CD8-positive, alpha-beta T cell (primary cell): ENCODE measurements at regions of chr11 and their contacts with region 1.

Region 1: GRCh38 chr11:3217676-3218482 is 734 bp downstream of the MRGPRG start:
- DNase-seq: peak in 1 of 9 experiments; percentile 4
- ATAC-seq: no peak
- H3K4me3 ChIP-seq: no peak overlapping the region
- H3K4me3 Mint-ChIP-seq: no peak overlapping the region
- H3K27ac ChIP-seq: no peak overlapping the region
- H3K27ac Mint-ChIP-seq: no peak overlapping the region
- H3K4me1 ChIP-seq: peaks cover 10% of the 10 kb centered on the region
- H3K4me1 Mint-ChIP-seq: no peaks in the 10 kb centered on the region
- H3K27me3 ChIP-seq: peaks cover 0 to 4% of the 10 kb centered on the region in 2 experiments
- H3K27me3 Mint-ChIP-seq: peaks cover 25% of the 10 kb centered on the region
- CTCF ChIP-seq: no peak

Region 2: GRCh38 chr11:2778630-2779498 is 439.0 kb before region 1 on chr11:
- CTCF ChIA-PET with region 1: no interaction called
- POLR2A ChIA-PET with region 1: no interaction called
- intact Hi-C with region 1: no loop called
- DNase-seq: peak in 3 of 9 experiments; percentile 4 to 45 (median 9)
- ATAC-seq: no peak
- H3K4me3 ChIP-seq: no peak overlapping the region
- H3K4me3 Mint-ChIP-seq: no peak overlapping the region
- H3K27ac ChIP-seq: no peak overlapping the region
- H3K27ac Mint-ChIP-seq: no peak overlapping the region
- H3K4me1 ChIP-seq: peaks cover 12% of the 10 kb centered on the region
- H3K4me1 Mint-ChIP-seq: peaks cover 13% of the 10 kb centered on the region
- H3K27me3 ChIP-seq: no peaks in the 10 kb centered on the region
- H3K27me3 Mint-ChIP-seq: no peaks in the 10 kb centered on the region
- CTCF ChIP-seq: no peak

Region 3: GRCh38 chr11:2975594-2975993 is 242.3 kb before region 1 on chr11:
- CTCF ChIA-PET with region 1: no interaction called
- POLR2A ChIA-PET with region 1: no interaction called
- intact Hi-C with region 1: loop called in 1 of 2 experiments (anchors 5 kb)
- DNase-seq: peak in 8 of 9 experiments; percentile 21 to 79 (median 62)
- ATAC-seq: peak; percentile 96
- H3K4me3 ChIP-seq: no peak overlapping the region
- H3K4me3 Mint-ChIP-seq: no peak overlapping the region
- H3K27ac ChIP-seq: no peak overlapping the region
- H3K27ac Mint-ChIP-seq: peak overlapping the region; percentile 73
- H3K4me1 ChIP-seq: peaks cover 25% of the 10 kb centered on the region
- H3K4me1 Mint-ChIP-seq: peaks cover 65% of the 10 kb centered on the region
- H3K27me3 ChIP-seq: no peaks in the 10 kb centered on the region
- H3K27me3 Mint-ChIP-seq: no peaks in the 10 kb centered on the region
- CTCF ChIP-seq: peak; percentile 60

Region 4: DNA sequence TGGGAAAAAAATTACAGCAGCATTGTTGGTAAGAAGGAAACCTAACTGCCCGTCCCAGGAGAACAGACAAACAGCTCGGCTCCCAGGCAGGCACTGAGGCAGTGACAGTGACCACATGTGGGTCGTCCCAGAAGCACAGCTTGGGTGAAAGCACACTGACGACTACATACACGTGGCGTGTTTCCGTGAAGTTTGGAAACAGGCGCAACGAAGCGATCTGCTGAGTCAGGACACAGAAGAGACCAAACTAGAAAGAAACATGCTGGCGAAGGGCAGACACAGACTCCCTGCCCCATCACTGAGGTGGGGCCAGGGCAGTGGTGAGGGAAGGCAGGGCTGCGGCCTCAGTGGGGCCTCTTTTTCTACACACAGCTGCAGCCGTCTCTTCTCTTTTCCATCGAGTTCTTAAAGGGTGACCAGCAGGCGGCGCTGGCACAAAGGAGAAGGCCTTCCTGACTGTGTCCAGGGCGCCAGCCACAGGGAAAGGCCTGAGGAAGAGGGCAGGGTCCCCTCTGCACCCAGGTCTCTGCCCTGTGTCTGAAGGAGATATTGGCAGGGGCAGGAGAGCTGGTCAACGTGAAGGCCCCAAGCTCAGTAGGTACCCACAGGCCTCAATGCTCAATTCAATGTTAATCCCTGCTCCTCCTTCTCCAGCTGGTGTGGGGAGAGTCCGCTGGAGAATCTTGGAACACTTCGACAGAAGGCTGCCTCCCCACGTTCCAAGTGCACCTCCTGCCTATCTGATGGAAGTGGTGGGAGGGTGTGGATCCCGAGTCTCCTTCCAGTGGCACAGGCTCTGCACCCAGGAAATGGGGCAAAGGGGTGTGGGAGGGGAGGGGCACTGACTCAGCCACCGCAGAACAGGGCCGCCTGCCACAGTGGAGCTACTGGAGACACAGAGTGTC is 180.6 kb before region 1 on chr11:
- CTCF ChIA-PET with region 1: no interaction called
- POLR2A ChIA-PET with region 1: no interaction called
- intact Hi-C with region 1: loop called (anchors 2 to 5 kb)
- DNase-seq: peak in 8 of 9 experiments; percentile 18 to 66 (median 48)
- ATAC-seq: peak; percentile 84
- H3K4me3 ChIP-seq: no peak overlapping the region
- H3K4me3 Mint-ChIP-seq: no peak overlapping the region
- H3K27ac ChIP-seq: no peak overlapping the region
- H3K27ac Mint-ChIP-seq: no peak overlapping the region
- H3K4me1 ChIP-seq: peaks cover 6% of the 10 kb centered on the region
- H3K4me1 Mint-ChIP-seq: peaks cover 12% of the 10 kb centered on the region
- H3K27me3 ChIP-seq: no peaks in the 10 kb centered on the region
- H3K27me3 Mint-ChIP-seq: no peaks in the 10 kb centered on the region
- CTCF ChIP-seq: peak; percentile 30

Region 5: DNA sequence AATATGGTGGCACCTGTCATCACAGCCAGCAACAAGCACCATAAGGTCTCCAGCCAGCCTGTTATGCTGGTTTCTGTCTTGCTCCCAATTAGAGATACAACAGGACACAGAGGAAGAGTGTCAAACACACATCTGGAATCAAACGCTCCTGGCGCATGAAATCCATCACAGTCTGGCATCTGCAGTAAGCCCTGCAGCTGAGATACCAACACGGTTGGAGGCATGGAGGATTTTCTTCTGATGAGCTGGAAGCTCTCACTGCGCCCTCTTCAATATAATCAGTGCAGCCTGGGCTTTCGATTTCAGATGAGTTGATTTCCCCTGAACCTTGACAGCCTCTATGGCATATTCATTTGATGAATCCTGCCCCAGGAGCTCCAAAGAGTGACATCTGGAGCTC is 132.8 kb before region 1 on chr11:
- CTCF ChIA-PET with region 1: no interaction called
- POLR2A ChIA-PET with region 1: no interaction called
- intact Hi-C with region 1: no loop called
- DNase-seq: no peak
- ATAC-seq: no peak
- H3K4me3 ChIP-seq: no peak overlapping the region
- H3K4me3 Mint-ChIP-seq: no peak overlapping the region
- H3K27ac ChIP-seq: no peak overlapping the region
- H3K27ac Mint-ChIP-seq: no peak overlapping the region
- H3K4me1 ChIP-seq: no peaks in the 10 kb centered on the region
- H3K4me1 Mint-ChIP-seq: no peaks in the 10 kb centered on the region
- H3K27me3 ChIP-seq: peaks cover 0 to 3% of the 10 kb centered on the region in 2 experiments
- H3K27me3 Mint-ChIP-seq: peaks cover 3% of the 10 kb centered on the region
- CTCF ChIP-seq: no peak

Region 6: DNA sequence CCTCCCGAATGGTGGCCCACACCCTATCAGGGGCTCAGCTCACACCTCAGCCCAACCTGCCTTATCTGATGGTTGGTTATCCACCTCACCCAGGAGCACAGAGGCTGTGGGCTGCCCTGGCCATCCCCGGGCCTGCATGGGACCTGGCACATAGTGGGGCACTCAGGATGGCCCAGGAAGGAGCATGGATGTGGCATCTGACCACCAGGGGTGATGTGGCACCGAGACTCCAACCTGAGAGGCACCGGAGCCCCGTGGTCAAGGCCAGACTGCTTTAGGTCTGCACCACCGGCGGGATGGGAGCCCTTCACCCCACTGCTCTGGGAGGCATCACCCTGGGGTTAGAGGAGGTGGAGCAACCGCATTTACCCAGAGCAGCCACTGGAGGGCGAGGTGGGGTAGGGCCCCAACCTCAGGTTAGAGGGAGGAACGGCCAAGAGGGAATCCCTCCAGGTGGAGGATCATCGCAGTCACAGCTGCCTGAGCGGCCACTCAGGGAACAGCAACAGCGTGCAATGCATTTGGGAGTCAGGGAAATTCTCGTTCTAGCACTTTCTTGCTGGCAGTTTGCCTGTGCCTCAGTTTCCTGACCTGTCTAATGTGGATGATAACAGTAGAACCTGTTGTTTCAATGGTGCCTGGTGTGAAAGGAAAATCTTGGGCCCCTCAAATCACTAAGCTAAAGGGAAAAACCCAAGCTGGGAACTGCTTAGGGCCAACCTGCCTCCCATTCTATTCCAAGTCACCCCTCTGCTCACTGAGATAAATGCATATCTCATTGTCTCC is 107.8 kb before region 1 on chr11:
- CTCF ChIA-PET with region 1: interaction called, 25 read pairs
- POLR2A ChIA-PET with region 1: no interaction called
- intact Hi-C with region 1: loop called in 1 of 2 experiments (anchors 1 kb)
- DNase-seq: peak in 8 of 9 experiments; percentile 16 to 71 (median 45)
- ATAC-seq: peak; percentile 72
- H3K4me3 ChIP-seq: no peak overlapping the region
- H3K4me3 Mint-ChIP-seq: no peak overlapping the region
- H3K27ac ChIP-seq: no peak overlapping the region
- H3K27ac Mint-ChIP-seq: no peak overlapping the region
- H3K4me1 ChIP-seq: peaks cover 3% of the 10 kb centered on the region
- H3K4me1 Mint-ChIP-seq: peaks cover 8% of the 10 kb centered on the region
- H3K27me3 ChIP-seq: no peaks in the 10 kb centered on the region
- H3K27me3 Mint-ChIP-seq: no peaks in the 10 kb centered on the region
- CTCF ChIP-seq: peak; percentile 40

Region 7: GRCh38 chr11:3153291-3153861 is 64.5 kb before region 1 on chr11:
- CTCF ChIA-PET with region 1: interaction called, 5 read pairs
- POLR2A ChIA-PET with region 1: no interaction called
- intact Hi-C with region 1: loop called in 1 of 2 experiments (anchors 10 kb)
- DNase-seq: no peak
- ATAC-seq: no peak
- H3K4me3 ChIP-seq: no peak overlapping the region
- H3K4me3 Mint-ChIP-seq: no peak overlapping the region
- H3K27ac ChIP-seq: peak overlapping the region in 1 of 2 experiments; percentile 68
- H3K27ac Mint-ChIP-seq: no peak overlapping the region
- H3K4me1 ChIP-seq: peaks cover 18% of the 10 kb centered on the region
- H3K4me1 Mint-ChIP-seq: peaks cover 12% of the 10 kb centered on the region
- H3K27me3 ChIP-seq: no peaks in the 10 kb centered on the region
- H3K27me3 Mint-ChIP-seq: no peaks in the 10 kb centered on the region
- CTCF ChIP-seq: no peak